ENCODE measurements at regions of chr15 and their contacts with region 1.

Region 1: GRCh38 chr15:90376789-90377188 is 11.3 kb upstream of the IQGAP1 start:
- DNase-seq: peak; percentile 28 to 81 (median 60)
- ATAC-seq: peak; percentile 98 to 99 (median 99)
- H3K4me3 ChIP-seq: peak overlapping the region in 1 of 2 donors; percentile 25
- H3K4me3 Mint-ChIP-seq: peak overlapping the region; percentile 25 to 68 (median 26)
- H3K27ac ChIP-seq: peak overlapping the region; percentile 61
- H3K27ac Mint-ChIP-seq: peak overlapping the region; percentile 66 to 83
- H3K4me1 ChIP-seq: peaks cover 31 to 47% of the 10 kb centered on the region in 2 experiments
- H3K4me1 Mint-ChIP-seq: peaks cover 38 to 54% (median 46%) of the 10 kb centered on the region in 3 donors
- H3K27me3 ChIP-seq: no peaks in the 10 kb centered on the region
- H3K27me3 Mint-ChIP-seq: no peaks in the 10 kb centered on the region

Region 2: DNA sequence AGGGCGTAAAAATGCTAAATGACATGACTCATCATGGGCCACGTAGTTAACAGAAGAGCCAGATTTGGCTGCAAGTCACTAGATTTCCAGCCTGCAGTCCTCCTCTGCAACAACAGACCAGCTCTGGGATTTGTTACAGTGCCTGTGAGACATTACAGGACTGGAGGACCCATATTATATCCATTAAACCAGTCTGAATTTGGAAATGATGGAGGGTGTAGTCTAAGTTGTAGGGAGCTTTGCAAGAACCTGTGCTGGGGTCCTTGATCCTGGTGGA is 13.9 kb before region 1 on chr15:
- CTCF ChIA-PET with region 1: interaction called in 1 of 2 experiments, 10 read pairs
- POLR2A ChIA-PET with region 1: interaction called in 1 of 2 experiments, 3 read pairs
- DNase-seq: no peak
- ATAC-seq: no peak
- H3K4me3 ChIP-seq: no peak overlapping the region
- H3K4me3 Mint-ChIP-seq: no peak overlapping the region
- H3K27ac ChIP-seq: no peak overlapping the region
- H3K27ac Mint-ChIP-seq: peak overlapping the region in 1 of 2 donors; percentile 44
- H3K4me1 ChIP-seq: peaks cover 11 to 14% of the 10 kb centered on the region in 2 experiments
- H3K4me1 Mint-ChIP-seq: peaks cover 15 to 26% (median 20%) of the 10 kb centered on the region in 3 donors
- H3K27me3 ChIP-seq: no peaks in the 10 kb centered on the region
- H3K27me3 Mint-ChIP-seq: no peaks in the 10 kb centered on the region